ENCODE measurements at regions of chr1 and their contacts with region 1.

Region 1: GRCh38 chr1:25099343-25099951 is 132.9 kb downstream of the SYF2 start:
- DNase-seq: peak; percentile 78 to 88 (median 79)
- H3K4me3 ChIP-seq: no peak overlapping the region
- H3K4me3 Mint-ChIP-seq: peak overlapping the region in 1 of 2 donors; percentile 69
- H3K27ac ChIP-seq: peak overlapping the region; percentile 1 to 7
- H3K27ac Mint-ChIP-seq: peak overlapping the region in 2 of 7 donors; percentile 67 to 80
- H3K4me1 ChIP-seq: peaks cover 32% of the 10 kb centered on the region in 2 donors
- H3K4me1 Mint-ChIP-seq: peaks cover 39% of the 10 kb centered on the region
- H3K27me3 ChIP-seq: no peaks in the 10 kb centered on the region
- H3K27me3 Mint-ChIP-seq: peaks cover 6 to 14% (median 7%) of the 10 kb centered on the region in 3 donors
- CTCF ChIP-seq: no peak

Region 2: DNA sequence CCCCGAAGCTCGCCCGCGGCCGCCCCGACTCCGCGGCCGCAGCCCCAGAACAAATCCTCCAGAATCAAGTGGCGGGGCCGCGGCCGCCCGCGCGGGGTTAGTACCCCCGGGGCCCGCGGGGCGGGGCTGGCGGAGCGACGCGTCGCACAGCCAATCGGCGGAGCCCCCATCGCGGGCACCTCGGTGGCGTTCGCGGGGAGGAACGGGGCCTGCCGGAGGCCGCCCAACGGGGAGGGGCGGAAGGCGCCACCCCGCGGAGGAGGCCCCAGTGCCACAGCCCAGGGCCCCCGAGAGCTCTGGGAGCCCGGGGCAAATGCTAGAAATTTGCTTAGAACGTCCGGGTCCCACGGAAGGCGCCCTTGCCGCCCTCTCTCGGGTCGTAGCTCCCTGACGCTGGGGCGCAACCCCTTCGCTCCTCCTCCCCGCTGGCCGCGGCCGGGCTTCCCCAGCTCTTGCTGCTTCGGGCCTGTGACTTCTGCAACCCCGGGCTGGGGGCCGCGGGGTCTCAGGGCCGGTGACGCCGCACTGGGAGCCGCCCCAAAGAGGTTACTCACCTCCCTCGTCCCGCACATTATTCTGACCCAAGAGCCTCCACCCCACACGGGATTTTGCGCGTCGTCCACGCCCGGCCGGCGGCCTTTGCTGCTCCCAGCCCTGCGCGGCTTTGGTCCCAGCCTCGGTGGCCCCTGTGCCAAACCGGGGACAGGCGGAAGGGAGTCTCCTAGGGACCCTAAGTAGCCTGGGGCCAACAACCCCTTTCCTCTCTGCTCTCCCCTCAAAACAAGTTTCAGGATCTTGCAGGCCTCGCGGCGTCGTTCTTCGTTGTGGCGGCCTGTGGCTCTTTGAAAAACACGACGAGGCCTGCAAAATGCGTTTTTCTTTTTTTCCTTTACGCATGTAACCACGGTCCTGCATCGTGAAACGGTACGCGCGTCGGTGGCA is 169.0 kb before region 1 on chr1 and contains the start of gene RUNX3:
- intact Hi-C with region 1: loop called (anchors 1 to 5 kb)
- DNase-seq: peak; percentile 78 to 85 (median 83)
- H3K4me3 ChIP-seq: peak within 1 kb of the TSS; percentile 68 to 85 (median 69)
- H3K4me3 Mint-ChIP-seq: peak within 1 kb of the TSS; percentile 93
- H3K27ac ChIP-seq: peak within 1 kb of the TSS; percentile 47 to 81
- H3K27ac Mint-ChIP-seq: peak within 1 kb of the TSS; percentile 84 to 93 (median 89)
- H3K4me1 ChIP-seq: peaks cover 39 to 57% of the 10 kb centered on the region in 2 donors
- H3K4me1 Mint-ChIP-seq: peaks cover 35% of the 10 kb centered on the region
- H3K27me3 ChIP-seq: peaks cover 0 to 59% of the 10 kb centered on the region in 2 donors
- H3K27me3 Mint-ChIP-seq: peaks cover 26 to 69% (median 68%) of the 10 kb centered on the region in 3 donors
- CTCF ChIP-seq: peak; percentile 30
- polyA plus RNA-seq, gene RUNX3: 4.4 to 27.9 (median 6.7) TPM

Region 3: DNA sequence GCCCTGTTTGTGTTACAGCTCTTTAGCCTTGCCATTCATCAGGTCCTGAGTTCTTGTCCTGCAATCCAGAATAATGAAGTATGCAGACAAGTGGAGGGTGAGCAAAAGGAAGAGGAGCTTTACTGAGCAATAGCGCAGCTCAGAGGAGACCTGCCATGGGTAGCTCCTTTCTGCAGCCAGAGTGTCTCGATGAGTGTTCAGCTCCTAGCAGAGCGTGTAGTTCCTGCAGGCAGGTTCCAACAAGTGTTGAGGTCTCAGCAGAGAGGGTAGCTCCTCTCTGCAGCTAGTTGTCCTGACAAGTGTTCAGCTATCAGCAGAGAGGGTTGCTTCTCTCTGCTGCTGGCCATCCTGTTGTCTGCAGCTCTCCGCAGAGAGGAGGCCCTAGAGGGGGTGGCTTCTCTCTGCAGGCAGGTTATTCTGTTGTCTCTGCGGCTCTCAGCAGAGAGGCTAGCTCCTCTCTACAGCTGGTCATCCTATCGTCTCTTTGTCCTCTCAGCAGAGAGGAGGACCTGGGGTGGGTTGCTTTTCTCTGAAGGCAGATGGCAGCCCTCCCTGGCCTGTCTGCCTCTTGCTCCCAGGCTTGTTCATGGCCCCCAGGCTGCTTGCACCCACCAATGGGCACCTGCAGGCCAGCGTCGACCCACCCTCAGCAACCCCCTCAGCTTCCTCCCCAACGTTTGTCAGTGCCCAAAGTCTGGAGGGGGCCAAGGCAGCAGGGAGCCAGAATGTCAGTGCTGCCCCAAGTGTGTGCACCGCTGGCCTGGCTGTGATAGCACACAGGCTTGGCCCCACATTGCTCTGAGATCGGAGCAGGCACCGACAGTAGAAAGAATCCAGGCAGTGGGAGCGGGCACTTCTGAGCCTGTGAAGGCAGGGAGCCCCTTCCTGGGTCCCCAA is 56.9 kb before region 1 on chr1:
- intact Hi-C with region 1: loop called in 1 of 2 experiments (anchors 10 kb)
- DNase-seq: no peak
- H3K4me3 ChIP-seq: no peak overlapping the region
- H3K4me3 Mint-ChIP-seq: peak overlapping the region in 1 of 2 donors; percentile 7
- H3K27ac ChIP-seq: no peak overlapping the region
- H3K27ac Mint-ChIP-seq: peak overlapping the region in 1 of 7 donors; percentile 11
- H3K4me1 ChIP-seq: no peaks in the 10 kb centered on the region
- H3K4me1 Mint-ChIP-seq: peaks cover 4% of the 10 kb centered on the region
- H3K27me3 ChIP-seq: no peaks in the 10 kb centered on the region
- H3K27me3 Mint-ChIP-seq: peaks cover 4 to 14% (median 11%) of the 10 kb centered on the region in 3 donors
- CTCF ChIP-seq: no peak

Region 4: GRCh38 chr1:25204797-25205480 is 105.5 kb after region 1 on chr1:
- intact Hi-C with region 1: loop called in 1 of 2 experiments (anchors 5 kb)
- DNase-seq: peak; percentile 33 to 64 (median 54)
- H3K4me3 ChIP-seq: no peak overlapping the region
- H3K4me3 Mint-ChIP-seq: no peak overlapping the region
- H3K27ac ChIP-seq: no peak overlapping the region
- H3K27ac Mint-ChIP-seq: no peak overlapping the region
- H3K4me1 ChIP-seq: no peaks in the 10 kb centered on the region
- H3K4me1 Mint-ChIP-seq: peaks cover 4% of the 10 kb centered on the region
- H3K27me3 ChIP-seq: no peaks in the 10 kb centered on the region
- H3K27me3 Mint-ChIP-seq: peaks cover 2 to 6% (median 6%) of the 10 kb centered on the region in 3 donors
- CTCF ChIP-seq: peak; percentile 84

Measured in CD14-positive monocyte (primary cell).